Activated T-helper 2 cell treated with anti-CD3 and anti-CD28 coated beads, Interferon-gamma antibody, Interleukin-2, Interleukin-4, amounts not matched to agents 10 μg/mL and 5 μg/mL and 100 μg/mL, durations not matched to agents 14 hours and 24 hours and 36 hours (primary cell): ENCODE measurements at regions of chr5 and their contacts with region 1.

Region 1: DNA sequence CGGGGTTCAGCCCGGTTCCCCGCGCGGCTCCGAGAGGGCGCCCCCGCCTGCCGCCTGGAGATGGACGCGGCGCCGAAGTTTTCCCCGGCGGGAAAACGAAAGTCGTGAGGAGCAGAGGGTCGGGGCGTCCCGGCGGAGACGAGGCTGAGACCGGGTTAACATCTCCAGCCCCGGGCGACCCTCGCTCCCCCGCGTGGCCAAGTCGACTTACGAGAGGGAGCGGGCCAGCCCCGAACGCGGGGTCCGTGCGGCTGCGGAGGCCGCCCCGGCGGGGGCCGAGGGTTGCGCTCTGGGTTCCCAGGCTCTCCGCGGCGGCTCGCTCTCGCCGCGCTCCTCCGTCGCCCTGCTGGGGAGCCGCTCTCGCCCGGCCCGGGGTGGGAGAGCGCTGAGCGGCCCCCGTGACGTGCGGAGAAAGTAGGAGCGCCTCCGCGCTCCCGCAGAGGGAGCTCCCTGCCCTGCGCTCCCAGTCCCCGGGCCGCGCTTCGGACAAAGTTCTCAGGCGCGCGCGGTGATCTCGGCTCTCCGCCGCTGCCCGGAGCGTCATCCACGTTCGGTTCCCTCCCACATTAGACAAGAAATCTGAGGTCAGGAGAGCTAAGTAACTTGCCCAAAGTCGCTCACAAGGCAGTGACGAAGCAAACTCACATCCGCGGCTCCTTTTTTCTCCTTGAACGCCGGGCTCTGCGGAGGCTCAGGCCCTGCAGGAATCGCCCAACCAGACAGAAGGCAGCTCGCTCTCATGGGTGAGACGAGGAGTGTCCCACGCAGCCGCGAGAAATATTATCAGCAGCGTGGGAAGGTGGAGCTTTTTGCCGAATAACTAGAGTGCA is 1.2 kb upstream of the GCNT4 start:
- DNase-seq: peak; percentile 36
- H3K4me3 Mint-ChIP-seq: peak overlapping the region; percentile 80
- H3K27ac Mint-ChIP-seq: no peak overlapping the region
- H3K4me1 Mint-ChIP-seq: peaks cover 42% of the 10 kb centered on the region
- H3K27me3 Mint-ChIP-seq: peaks cover 48% of the 10 kb centered on the region

Region 2: GRCh38 chr5:74684900-74685851 is 368.3 kb before region 1 on chr5 and contains the start of gene HEXB:
- intact Hi-C with region 1: loop called (anchors 10 kb)
- DNase-seq: peak; percentile 79
- H3K4me3 Mint-ChIP-seq: peak within 1 kb of the TSS; percentile 81
- H3K27ac Mint-ChIP-seq: peak within 1 kb of the TSS; percentile 23
- H3K4me1 Mint-ChIP-seq: peaks cover 17% of the 10 kb centered on the region
- H3K27me3 Mint-ChIP-seq: peaks cover 17% of the 10 kb centered on the region
- total RNA-seq, gene HEXB: 56.6 and 59.0 TPM in 2 replicates

Region 3: GRCh38 chr5:74903165-74903787 is 150.2 kb before region 1 on chr5:
- intact Hi-C with region 1: no loop called
- DNase-seq: no peak
- H3K4me3 Mint-ChIP-seq: no peak overlapping the region
- H3K27ac Mint-ChIP-seq: no peak overlapping the region
- H3K4me1 Mint-ChIP-seq: no peaks in the 10 kb centered on the region
- H3K27me3 Mint-ChIP-seq: peaks cover 3% of the 10 kb centered on the region

Region 4: GRCh38 chr5:74945561-74946165 is 107.9 kb before region 1 on chr5:
- intact Hi-C with region 1: loop called (anchors 5 kb)
- DNase-seq: no peak
- H3K4me3 Mint-ChIP-seq: no peak overlapping the region
- H3K27ac Mint-ChIP-seq: no peak overlapping the region
- H3K4me1 Mint-ChIP-seq: peaks cover 8% of the 10 kb centered on the region
- H3K27me3 Mint-ChIP-seq: peaks cover 62% of the 10 kb centered on the region

Region 5: GRCh38 chr5:75336625-75337339 is 283.3 kb after region 1 on chr5 and contains the start of gene HMGCR:
- intact Hi-C with region 1: loop called (anchors 2 kb)
- DNase-seq: peak; percentile 97
- H3K4me3 Mint-ChIP-seq: no peak within 1 kb of the TSS
- H3K27ac Mint-ChIP-seq: no peak within 1 kb of the TSS
- H3K4me1 Mint-ChIP-seq: peaks cover 33% of the 10 kb centered on the region
- H3K27me3 Mint-ChIP-seq: no peaks in the 10 kb centered on the region
- total RNA-seq, gene HMGCR: 122 and 123 TPM in 2 replicates

Region 6: GRCh38 chr5:75668977-75669689 is 615.6 kb after region 1 on chr5:
- intact Hi-C with region 1: loop called (anchors 5 kb)
- DNase-seq: peak; percentile 57
- H3K4me3 Mint-ChIP-seq: peak overlapping the region; percentile 65
- H3K27ac Mint-ChIP-seq: peak overlapping the region; percentile 92
- H3K4me1 Mint-ChIP-seq: peaks cover 54% of the 10 kb centered on the region
- H3K27me3 Mint-ChIP-seq: no peaks in the 10 kb centered on the region